ENCODE measurements at regions of chr11 and their contacts with region 1.

Region 1: GRCh38 chr11:18844753-18845367 is 53.3 kb upstream of the PTPN5 start:
- ATAC-seq: peak in 3 of 8 experiments; percentile 75 to 88 (median 75)
- H3K4me3 ChIP-seq: no peak overlapping the region
- H3K27ac ChIP-seq: no peak overlapping the region
- H3K4me1 ChIP-seq: no peaks in the 10 kb centered on the region

Region 2: GRCh38 chr11:18934195-18934814 is 89.4 kb after region 1 on chr11:
- in situ Hi-C with region 1: loop called in 1 of 9 experiments (anchors 25 kb)
- ATAC-seq: no peak
- H3K4me3 ChIP-seq: no peak overlapping the region
- H3K27ac ChIP-seq: no peak overlapping the region
- H3K4me1 ChIP-seq: no peaks in the 10 kb centered on the region